H1 (cell line): ENCODE measurements at regions of chr1 and their contacts with region 1.

Region 1: GRCh38 chr1:7808253-7808844 is 24.3 kb downstream of the PER3 start:
- DNase-seq: no peak
- H3K4me3 ChIP-seq: no peak overlapping the region
- H3K27ac ChIP-seq: no peak overlapping the region
- H3K4me1 ChIP-seq: no peaks in the 10 kb centered on the region
- H3K27me3 ChIP-seq: no peaks in the 10 kb centered on the region
- CTCF ChIP-seq: peak in 2 of 3 experiments; percentile 12 to 59; a peak in 2 of 4 replicates
- EP300 ChIP-seq: no peak
- POLR2A ChIP-seq: no peak
- RAD21 ChIP-seq: peak; percentile 51 to 61

Region 2: DNA sequence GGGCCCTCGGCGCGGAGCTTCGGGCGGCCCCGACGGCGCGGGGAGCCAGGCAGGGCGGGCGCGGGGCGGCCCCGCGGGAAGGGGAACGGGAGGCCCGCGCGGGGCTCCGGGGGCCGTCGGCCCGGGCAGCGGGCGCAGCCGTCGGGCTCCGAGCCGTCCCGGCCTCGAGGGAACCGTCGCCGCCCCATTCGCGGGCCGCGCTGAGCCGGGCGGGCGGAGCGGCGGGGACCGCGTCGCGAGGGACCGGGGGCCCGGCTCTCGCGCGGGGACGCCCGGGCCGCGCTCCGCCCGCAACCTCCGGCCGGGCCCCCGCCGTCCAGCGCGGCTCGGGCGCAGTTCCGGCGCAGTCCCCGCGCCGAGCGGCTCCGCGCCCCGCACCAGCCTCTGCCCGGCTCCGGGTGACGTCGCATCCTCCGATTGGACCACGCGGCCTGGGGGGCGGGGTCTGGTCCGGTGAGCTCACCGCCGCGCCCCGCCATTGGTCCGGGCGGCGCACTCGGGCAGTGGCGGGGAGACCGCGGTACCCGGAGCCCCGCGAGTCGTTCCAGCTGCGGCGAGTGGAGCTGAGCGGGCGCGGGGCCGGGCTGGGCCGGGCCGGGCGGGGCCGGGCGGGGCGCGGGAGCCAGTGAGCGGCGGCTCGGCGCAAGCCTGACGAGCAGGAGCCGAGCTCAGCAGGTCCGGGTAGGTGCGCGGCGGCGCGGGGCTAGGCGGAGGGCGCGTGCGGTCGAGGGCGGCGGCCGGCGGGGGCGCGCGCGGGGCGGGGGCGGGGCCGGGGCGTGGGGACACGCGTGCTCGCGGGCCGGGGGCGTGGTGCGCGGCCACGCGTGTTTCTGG is 103.9 kb before region 1 on chr1:
- CTCF ChIA-PET with region 1: no interaction called
- POLR2A ChIA-PET with region 1: no interaction called
- DNase-seq: peak; percentile 75 to 97
- H3K4me3 ChIP-seq: peak overlapping the region in 3 of 4 experiments; percentile 16 to 62 (median 56); a peak in 5 of 8 replicates
- H3K27ac ChIP-seq: no peak overlapping the region
- H3K4me1 ChIP-seq: peaks cover 2 to 16% (median 10%) of the 10 kb centered on the region in 4 experiments; a peak in 6 of 7 replicates
- H3K27me3 ChIP-seq: peaks cover 0 to 21% (median 15%) of the 10 kb centered on the region in 4 experiments; a peak in 5 of 7 replicates
- CTCF ChIP-seq: no peak
- EP300 ChIP-seq: no peak
- POLR2A ChIP-seq: no peak
- RAD21 ChIP-seq: no peak

Region 3: GRCh38 chr1:7777591-7777990 is 30.8 kb before region 1 on chr1:
- CTCF ChIA-PET with region 1: no interaction called
- POLR2A ChIA-PET with region 1: no interaction called
- DNase-seq: no peak
- H3K4me3 ChIP-seq: no peak overlapping the region
- H3K27ac ChIP-seq: no peak overlapping the region
- H3K4me1 ChIP-seq: no peaks in the 10 kb centered on the region
- H3K27me3 ChIP-seq: no peaks in the 10 kb centered on the region
- CTCF ChIP-seq: no peak
- EP300 ChIP-seq: no peak
- POLR2A ChIP-seq: no peak
- RAD21 ChIP-seq: no peak

Region 4: GRCh38 chr1:7824701-7825100 is 16.4 kb after region 1 on chr1:
- CTCF ChIA-PET with region 1: interaction called, 10 read pairs
- POLR2A ChIA-PET with region 1: interaction called, 3 read pairs
- DNase-seq: no peak
- H3K4me3 ChIP-seq: no peak overlapping the region
- H3K27ac ChIP-seq: no peak overlapping the region
- H3K4me1 ChIP-seq: no peaks in the 10 kb centered on the region
- H3K27me3 ChIP-seq: no peaks in the 10 kb centered on the region
- CTCF ChIP-seq: no peak
- EP300 ChIP-seq: no peak
- POLR2A ChIP-seq: no peak
- RAD21 ChIP-seq: no peak

Region 5: GRCh38 chr1:8174807-8175206 is 366.5 kb after region 1 on chr1:
- CTCF ChIA-PET with region 1: no interaction called
- POLR2A ChIA-PET with region 1: no interaction called
- DNase-seq: no peak
- H3K4me3 ChIP-seq: no peak overlapping the region
- H3K27ac ChIP-seq: no peak overlapping the region
- H3K4me1 ChIP-seq: peaks cover 0 to 2% (median under 1%) of the 10 kb centered on the region in 4 experiments; a peak in 3 of 7 replicates
- H3K27me3 ChIP-seq: no peaks in the 10 kb centered on the region
- CTCF ChIP-seq: no peak
- EP300 ChIP-seq: no peak
- POLR2A ChIP-seq: no peak
- RAD21 ChIP-seq: no peak